ENCODE measurements at regions of chr2 and their contacts with region 1.

Region 1: DNA sequence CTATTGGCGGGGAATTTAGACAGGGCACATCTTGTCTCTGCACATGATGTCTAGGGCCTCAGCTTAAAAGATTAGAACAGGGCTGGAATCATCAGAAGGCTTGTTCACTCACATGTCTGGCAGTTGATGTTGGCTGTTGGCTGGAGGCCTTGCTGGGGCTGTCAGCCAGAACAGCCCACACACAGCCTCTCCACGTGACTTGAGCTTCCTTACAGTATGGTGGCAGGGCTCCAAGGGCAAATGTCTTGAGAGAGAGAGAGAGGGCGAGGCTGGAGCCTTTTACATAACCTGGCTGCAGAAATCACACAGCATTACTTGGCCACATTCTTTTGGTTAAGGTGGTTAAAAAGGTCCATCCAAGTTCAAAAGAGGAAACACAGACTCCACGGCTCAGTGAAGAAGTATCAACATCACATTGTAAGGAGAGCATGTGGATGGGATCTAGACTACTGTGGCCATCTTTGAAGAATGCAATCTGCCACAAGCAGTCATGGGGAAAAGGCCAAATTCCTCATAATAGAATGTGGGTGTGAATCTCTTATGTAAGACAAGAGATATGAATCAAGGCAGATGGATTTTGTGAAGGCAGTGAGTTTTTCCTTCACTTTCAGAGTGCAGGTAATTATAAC is 30.4 kb downstream of the SRSF7 start:
- DNase-seq: peak; percentile 79 to 88
- ATAC-seq: peak; percentile 76 to 91
- H3K4me3 ChIP-seq: no peak overlapping the region
- H3K27ac ChIP-seq: peak overlapping the region; percentile 76 to 90 (median 88)
- H3K4me1 ChIP-seq: peaks cover 29 to 32% of the 10 kb centered on the region in 2 donors
- H3K27me3 ChIP-seq: no peaks in the 10 kb centered on the region
- CTCF ChIP-seq: no peak
- POLR2A ChIP-seq: no peak

Region 2: GRCh38 chr2:38442643-38443541 is 277.8 kb before region 1 on chr2:
- in situ Hi-C with region 1: no loop called
- intact Hi-C with region 1: no loop called
- DNase-seq: peak in 1 of 2 donors; percentile 26
- ATAC-seq: peak in 1 of 2 donors; percentile 63
- H3K4me3 ChIP-seq: no peak overlapping the region
- H3K27ac ChIP-seq: no peak overlapping the region
- H3K4me1 ChIP-seq: peaks cover 17 to 21% of the 10 kb centered on the region in 2 donors
- H3K27me3 ChIP-seq: no peaks in the 10 kb centered on the region
- CTCF ChIP-seq: no peak
- POLR2A ChIP-seq: no peak

Region 3: DNA sequence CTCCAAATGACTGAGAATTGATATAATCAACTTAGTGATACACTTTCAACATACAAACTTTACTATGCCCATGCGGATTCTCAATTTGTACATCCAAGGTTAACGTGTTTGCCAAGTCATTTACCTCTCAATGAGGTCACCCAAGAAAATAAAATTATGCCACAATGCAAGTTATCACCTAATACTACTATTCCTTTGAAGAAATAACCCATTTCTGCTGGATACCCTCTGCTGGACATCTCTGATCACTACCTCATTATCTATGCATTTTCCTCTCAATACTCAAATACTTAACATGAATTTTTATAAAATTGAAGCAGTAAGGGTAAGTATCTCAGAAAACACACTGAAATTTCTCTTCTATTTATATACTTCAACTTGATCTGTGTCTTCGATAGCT is 130.7 kb before region 1 on chr2:
- in situ Hi-C with region 1: no loop called
- intact Hi-C with region 1: loop called (anchors 2 kb)
- DNase-seq: no peak
- ATAC-seq: no peak
- H3K4me3 ChIP-seq: no peak overlapping the region
- H3K27ac ChIP-seq: peak overlapping the region; percentile 77 to 98 (median 90)
- H3K4me1 ChIP-seq: peaks cover 67 to 88% of the 10 kb centered on the region in 2 donors
- H3K27me3 ChIP-seq: no peaks in the 10 kb centered on the region
- CTCF ChIP-seq: no peak
- POLR2A ChIP-seq: no peak

Region 4: GRCh38 chr2:38665854-38666555 is 54.7 kb before region 1 on chr2 and contains the start of gene GALM:
- in situ Hi-C with region 1: no loop called
- intact Hi-C with region 1: loop called (anchors 5 kb)
- DNase-seq: peak; percentile 79 to 89
- ATAC-seq: peak; percentile 81 to 96
- H3K4me3 ChIP-seq: peak within 1 kb of the TSS; percentile 63 to 76 (median 75)
- H3K27ac ChIP-seq: peak within 1 kb of the TSS; percentile 73 to 81 (median 78)
- H3K4me1 ChIP-seq: peaks cover 13 to 23% of the 10 kb centered on the region in 2 donors
- H3K27me3 ChIP-seq: no peaks in the 10 kb centered on the region
- CTCF ChIP-seq: no peak
- POLR2A ChIP-seq: peak; percentile 38 to 70
- total RNA-seq, gene GALM: 5.3 to 16.9 (median 14.9) TPM

Region 5: DNA sequence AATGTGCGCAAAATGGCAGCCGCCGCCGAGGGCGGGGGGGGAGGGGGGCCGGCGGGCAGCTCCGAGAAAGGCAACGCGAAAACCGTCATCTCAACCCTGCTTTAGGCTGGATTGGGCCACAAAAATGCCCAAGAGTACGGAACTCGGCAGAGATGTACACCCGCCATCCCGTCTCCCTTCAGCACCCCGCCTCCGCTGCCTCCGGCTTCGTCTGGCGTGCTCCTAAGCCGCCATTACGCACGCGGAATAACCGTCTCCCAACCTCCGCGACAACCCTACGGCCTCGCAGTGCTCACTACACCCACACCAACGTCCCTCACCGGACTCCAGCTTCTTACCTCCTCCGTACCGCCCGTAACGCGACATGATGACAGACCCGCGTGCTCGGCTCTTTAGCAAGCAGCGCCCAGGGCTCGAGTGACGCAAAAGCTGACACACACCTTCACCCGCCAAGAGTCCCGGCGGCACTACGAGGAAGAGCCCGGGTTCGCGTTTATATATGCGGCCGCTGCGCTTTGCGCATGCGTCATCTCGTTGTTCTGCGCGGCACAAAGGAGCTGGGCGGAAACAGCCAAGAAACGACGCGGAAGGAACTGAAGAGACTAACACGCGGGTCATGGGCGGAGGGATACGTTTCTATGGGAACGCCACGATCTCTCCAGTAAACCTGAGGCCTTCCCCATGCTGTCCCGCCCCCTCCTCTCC is 30.3 kb after region 1 on chr2 and contains the start of gene SRSF7:
- in situ Hi-C with region 1: no loop called
- intact Hi-C with region 1: loop called (anchors 2 kb)
- DNase-seq: peak; percentile 96 to 97
- ATAC-seq: peak; percentile 94 to 96
- H3K4me3 ChIP-seq: peak within 1 kb of the TSS; percentile 72 to 88 (median 82)
- H3K27ac ChIP-seq: peak within 1 kb of the TSS; percentile 96 to 98 (median 97)
- H3K4me1 ChIP-seq: peaks cover 24 to 26% of the 10 kb centered on the region in 2 donors
- H3K27me3 ChIP-seq: no peaks in the 10 kb centered on the region
- CTCF ChIP-seq: no peak
- POLR2A ChIP-seq: peak; percentile 100
- total RNA-seq, gene SRSF7: 21.5 to 51.4 (median 34.1) TPM

Measured in gastrocnemius medialis (tissue), 4 donors.